HCT116 (cell line): ENCODE measurements at regions of chr10 and their contacts with region 1.

Region 1: GRCh38 chr10:125936331-125936730 is 40.0 kb downstream of the FANK1 start:
- DNase-seq: no peak
- ATAC-seq: no peak
- H3K4me3 ChIP-seq: no peak overlapping the region
- H3K27ac ChIP-seq: no peak overlapping the region
- H3K4me1 ChIP-seq: peaks cover 4 to 10% of the 10 kb centered on the region in 2 experiments; a peak in 3 of 4 replicates
- H3K27me3 ChIP-seq: no peaks in the 10 kb centered on the region
- CTCF ChIP-seq: no peak
- POLR2A ChIP-seq: no peak
- RAD21 ChIP-seq: no peak

Region 2: GRCh38 chr10:125783957-125784356 is 152.4 kb before region 1 on chr10:
- CTCF ChIA-PET with region 1: no interaction called
- POLR2A ChIA-PET with region 1: no interaction called
- RAD21 ChIA-PET with region 1: no interaction called
- intact Hi-C with region 1: no loop called
- DNase-seq: no peak
- ATAC-seq: no peak
- H3K4me3 ChIP-seq: no peak overlapping the region
- H3K27ac ChIP-seq: no peak overlapping the region
- H3K4me1 ChIP-seq: peaks cover 0 to 4% of the 10 kb centered on the region in 2 experiments; a peak in 1 of 4 replicates
- H3K27me3 ChIP-seq: no peaks in the 10 kb centered on the region
- CTCF ChIP-seq: no peak
- POLR2A ChIP-seq: no peak
- RAD21 ChIP-seq: no peak

Region 3: GRCh38 chr10:125953778-125954385 is 17.6 kb after region 1 on chr10:
- CTCF ChIA-PET with region 1: no interaction called
- POLR2A ChIA-PET with region 1: no interaction called
- RAD21 ChIA-PET with region 1: no interaction called
- intact Hi-C with region 1: loop called (anchors 1 kb)
- DNase-seq: no peak
- ATAC-seq: no peak
- H3K4me3 ChIP-seq: no peak overlapping the region
- H3K27ac ChIP-seq: no peak overlapping the region
- H3K4me1 ChIP-seq: no peaks in the 10 kb centered on the region
- H3K27me3 ChIP-seq: no peaks in the 10 kb centered on the region
- CTCF ChIP-seq: no peak
- POLR2A ChIP-seq: no peak
- RAD21 ChIP-seq: no peak

Region 4: GRCh38 chr10:125976960-125977603 is 40.8 kb after region 1 on chr10:
- CTCF ChIA-PET with region 1: interaction called, 12 read pairs
- POLR2A ChIA-PET with region 1: interaction called, 3 read pairs
- RAD21 ChIA-PET with region 1: interaction called in 1 of 2 experiments, 6 read pairs
- intact Hi-C with region 1: no loop called
- DNase-seq: peak; percentile 22
- ATAC-seq: peak; percentile 63
- H3K4me3 ChIP-seq: no peak overlapping the region
- H3K27ac ChIP-seq: no peak overlapping the region
- H3K4me1 ChIP-seq: peaks cover 9 to 14% of the 10 kb centered on the region in 2 experiments
- H3K27me3 ChIP-seq: no peaks in the 10 kb centered on the region
- CTCF ChIP-seq: peak; percentile 13 to 63 (median 59); a peak in 4 of 6 replicates
- POLR2A ChIP-seq: no peak
- RAD21 ChIP-seq: no peak

Region 5: DNA sequence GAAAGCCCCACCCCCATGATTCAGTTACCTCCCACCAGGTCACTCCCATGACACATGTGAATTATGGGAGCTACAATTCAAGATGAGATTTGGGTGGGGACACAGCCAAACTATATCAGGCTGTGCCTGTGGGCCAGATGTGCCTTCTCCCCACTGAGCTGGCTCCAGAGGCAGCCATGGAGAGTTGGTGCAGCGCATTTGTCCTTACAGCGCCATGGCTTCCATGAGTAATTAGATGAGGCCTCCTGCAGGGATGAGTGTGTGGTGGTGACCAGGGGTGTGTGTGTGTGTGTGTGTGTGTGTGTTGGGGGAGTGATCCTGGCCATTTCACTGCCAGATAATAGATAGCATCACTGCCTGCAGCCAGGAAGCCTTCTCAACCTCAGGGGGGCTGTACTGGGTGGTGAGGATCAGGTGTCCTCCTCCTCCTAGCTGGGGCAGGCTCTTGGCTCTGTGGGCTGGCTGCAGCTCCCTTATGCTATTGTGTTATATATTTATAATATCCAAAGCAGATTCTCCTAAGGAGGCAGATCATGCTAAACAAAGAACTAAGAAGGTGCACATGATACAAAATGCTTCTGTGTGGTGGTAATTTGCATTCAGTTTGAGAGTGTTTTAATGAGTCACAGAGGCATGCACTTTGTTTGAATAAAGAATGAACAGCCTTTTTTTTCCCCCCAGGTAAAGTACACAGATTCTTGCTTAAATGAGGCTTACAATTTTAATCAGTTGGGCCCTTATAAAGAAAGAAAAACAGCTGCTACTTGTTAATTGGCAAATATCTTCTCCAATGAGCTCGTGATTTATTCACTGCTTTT is 54.9 kb after region 1 on chr10:
- CTCF ChIA-PET with region 1: no interaction called
- POLR2A ChIA-PET with region 1: no interaction called
- RAD21 ChIA-PET with region 1: no interaction called
- intact Hi-C with region 1: no loop called
- DNase-seq: no peak
- ATAC-seq: no peak
- H3K4me3 ChIP-seq: no peak overlapping the region
- H3K27ac ChIP-seq: no peak overlapping the region
- H3K4me1 ChIP-seq: no peaks in the 10 kb centered on the region
- H3K27me3 ChIP-seq: peaks cover 7% of the 10 kb centered on the region; the same call in 1 of the 2 replicates
- CTCF ChIP-seq: no peak
- POLR2A ChIP-seq: no peak
- RAD21 ChIP-seq: no peak

Region 6: GRCh38 chr10:126171553-126171952 is 235.2 kb after region 1 on chr10:
- CTCF ChIA-PET with region 1: no interaction called
- POLR2A ChIA-PET with region 1: no interaction called
- RAD21 ChIA-PET with region 1: no interaction called
- intact Hi-C with region 1: no loop called
- DNase-seq: no peak
- ATAC-seq: no peak
- H3K4me3 ChIP-seq: no peak overlapping the region
- H3K27ac ChIP-seq: no peak overlapping the region
- H3K4me1 ChIP-seq: no peaks in the 10 kb centered on the region
- H3K27me3 ChIP-seq: peaks cover 52% of the 10 kb centered on the region
- CTCF ChIP-seq: no peak
- POLR2A ChIP-seq: no peak
- RAD21 ChIP-seq: no peak

Region 7: DNA sequence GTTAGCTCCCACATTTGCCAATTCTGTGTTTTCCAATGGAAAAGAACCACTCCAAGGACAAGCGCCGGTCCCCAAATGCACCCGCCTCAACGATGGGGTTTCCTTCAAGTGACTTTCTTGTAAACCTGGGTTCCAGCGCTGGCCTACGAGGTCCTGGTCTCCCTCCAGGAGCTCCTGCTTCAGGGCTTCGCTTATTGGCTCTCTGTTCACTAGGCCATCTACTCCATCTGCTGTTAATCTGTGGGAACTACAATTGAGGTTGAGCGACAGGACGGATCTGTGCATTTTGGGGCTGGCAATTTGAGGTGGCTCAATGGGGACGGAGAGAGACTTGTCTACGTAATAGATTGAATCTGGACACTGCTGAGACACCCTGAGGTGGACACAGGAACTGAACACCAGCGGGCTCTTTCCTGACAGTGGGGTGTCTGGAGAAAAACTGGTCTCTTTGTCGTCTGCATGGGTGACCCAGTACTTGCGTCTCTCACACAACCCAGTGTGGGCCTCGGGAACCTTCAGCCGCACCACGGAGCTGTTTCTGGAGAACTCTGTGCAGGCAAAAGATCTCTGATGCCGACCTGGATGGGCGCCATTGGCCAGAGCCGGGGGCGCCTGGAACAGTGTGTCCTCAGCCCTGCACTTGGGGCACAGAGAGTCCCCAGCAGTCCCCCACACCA is 567.9 kb after region 1 on chr10:
- CTCF ChIA-PET with region 1: interaction called, 35 read pairs
- POLR2A ChIA-PET with region 1: no interaction called
- RAD21 ChIA-PET with region 1: interaction called in 1 of 2 experiments, 4 read pairs
- intact Hi-C with region 1: loop called (anchors 1 kb)
- DNase-seq: peak; percentile 68
- ATAC-seq: peak; percentile 96
- H3K4me3 ChIP-seq: no peak overlapping the region
- H3K27ac ChIP-seq: no peak overlapping the region
- H3K4me1 ChIP-seq: no peaks in the 10 kb centered on the region
- H3K27me3 ChIP-seq: peaks cover 25% of the 10 kb centered on the region; the same call in 1 of the 2 replicates
- CTCF ChIP-seq: peak; percentile 74 to 83 (median 75)
- POLR2A ChIP-seq: no peak
- RAD21 ChIP-seq: peak; percentile 91

Region 8: GRCh38 chr10:126749015-126749655 is 812.8 kb after region 1 on chr10:
- CTCF ChIA-PET with region 1: interaction called, 4 read pairs
- POLR2A ChIA-PET with region 1: no interaction called
- RAD21 ChIA-PET with region 1: no interaction called
- intact Hi-C with region 1: loop called (anchors 2 kb)
- DNase-seq: peak; percentile 70
- ATAC-seq: peak; percentile 100
- H3K4me3 ChIP-seq: no peak overlapping the region
- H3K27ac ChIP-seq: no peak overlapping the region
- H3K4me1 ChIP-seq: no peaks in the 10 kb centered on the region
- H3K27me3 ChIP-seq: peaks cover 5% of the 10 kb centered on the region; the same call in 1 of the 2 replicates
- CTCF ChIP-seq: peak; percentile 71 to 98 (median 96)
- POLR2A ChIP-seq: no peak
- RAD21 ChIP-seq: peak; percentile 83